Activated CD4-positive, alpha-beta memory T cell treated with anti-CD3 and anti-CD28 coated beads, Interleukin-2, amount 10 ng/mL, durations not matched to agents 7 days and 5 days (primary cell): ENCODE measurements at regions of chr1 and their contacts with region 1.

Region 1: GRCh38 chr1:94512816-94513215 is 28.7 kb downstream of the F3 start:
- DNase-seq: no peak
- H3K4me3 Mint-ChIP-seq: no peak overlapping the region
- H3K27ac Mint-ChIP-seq: no peak overlapping the region
- H3K4me1 Mint-ChIP-seq: no peaks in the 10 kb centered on the region
- H3K27me3 Mint-ChIP-seq: no peaks in the 10 kb centered on the region

Region 2: DNA sequence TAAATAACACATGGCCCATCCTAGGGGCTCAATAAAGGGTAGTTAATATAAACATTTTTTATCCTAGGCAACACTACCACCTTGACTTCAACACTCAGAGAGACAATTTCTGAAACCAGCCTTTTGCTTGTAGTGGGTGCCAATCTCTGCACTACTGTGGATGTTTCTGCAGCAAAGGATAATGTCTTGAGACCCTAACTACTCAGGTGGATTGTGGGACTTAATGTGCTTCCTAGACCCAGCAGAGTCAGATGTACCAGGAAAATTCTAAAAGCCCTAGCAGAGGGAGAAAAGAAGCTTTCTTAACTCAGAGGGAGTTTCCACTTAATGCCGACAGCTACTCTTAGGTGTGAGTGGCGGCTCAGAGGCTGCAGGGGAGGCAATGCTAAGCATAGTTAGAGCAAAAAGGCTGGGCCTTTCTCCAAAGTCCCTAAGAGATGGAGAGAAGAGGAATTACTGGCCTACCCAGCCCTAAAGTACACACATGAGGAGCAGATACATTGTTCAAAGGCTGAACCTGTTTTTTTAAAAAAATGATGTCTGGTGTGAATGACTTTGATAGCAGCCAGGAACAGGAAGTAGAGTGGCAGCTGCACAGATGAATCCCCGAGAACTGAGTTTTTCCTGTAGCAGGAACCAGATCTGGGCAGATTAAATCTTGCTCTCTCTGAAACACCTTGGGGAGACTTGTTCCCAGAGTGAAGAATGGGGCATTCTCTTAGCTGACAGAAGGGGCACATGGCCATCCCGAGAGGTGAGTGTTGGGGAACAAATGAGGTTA is 128.1 kb before region 1 on chr1:
- CTCF ChIA-PET with region 1: no interaction called
- POLR2A ChIA-PET with region 1: no interaction called
- DNase-seq: no peak
- H3K4me3 Mint-ChIP-seq: no peak overlapping the region
- H3K27ac Mint-ChIP-seq: no peak overlapping the region
- H3K4me1 Mint-ChIP-seq: peaks cover 18% of the 10 kb centered on the region
- H3K27me3 Mint-ChIP-seq: peaks cover 15% of the 10 kb centered on the region

Region 3: GRCh38 chr1:94417978-94418663 is 94.7 kb before region 1 on chr1 and contains the start of gene ABCD3:
- CTCF ChIA-PET with region 1: no interaction called
- POLR2A ChIA-PET with region 1: no interaction called
- DNase-seq: peak; percentile 96
- H3K4me3 Mint-ChIP-seq: no peak within 1 kb of the TSS
- H3K27ac Mint-ChIP-seq: peak within 1 kb of the TSS; percentile 42
- H3K4me1 Mint-ChIP-seq: peaks cover 21% of the 10 kb centered on the region
- H3K27me3 Mint-ChIP-seq: peaks cover 12% of the 10 kb centered on the region
- total RNA-seq, gene ABCD3: 19.6 to 21.4 TPM

Region 4: DNA sequence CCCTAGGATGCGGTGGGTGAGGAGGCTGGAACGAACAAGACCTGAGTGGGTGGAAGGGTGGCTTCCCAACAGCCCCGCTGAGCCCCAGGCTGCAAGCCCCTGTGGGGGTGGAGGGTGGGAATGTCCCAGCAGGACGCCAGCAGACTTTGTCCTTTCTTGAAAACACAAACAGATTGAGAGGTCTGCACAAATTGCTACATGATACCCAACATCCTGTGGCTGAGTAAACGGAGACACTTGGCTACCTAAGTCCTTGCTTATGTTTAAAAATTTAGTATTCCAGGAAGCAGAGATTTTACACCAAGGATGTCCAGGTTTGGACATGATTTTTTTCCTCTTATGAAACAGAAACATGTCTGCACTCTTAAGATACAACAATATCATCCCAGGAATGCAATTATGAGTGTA is 40.5 kb after region 1 on chr1:
- CTCF ChIA-PET with region 1: no interaction called
- POLR2A ChIA-PET with region 1: no interaction called
- DNase-seq: no peak
- H3K4me3 Mint-ChIP-seq: no peak overlapping the region
- H3K27ac Mint-ChIP-seq: no peak overlapping the region
- H3K4me1 Mint-ChIP-seq: no peaks in the 10 kb centered on the region
- H3K27me3 Mint-ChIP-seq: peaks cover 8% of the 10 kb centered on the region

Region 5: GRCh38 chr1:94801919-94802546 is 289.2 kb after region 1 on chr1:
- CTCF ChIA-PET with region 1: interaction called, 11 read pairs
- POLR2A ChIA-PET with region 1: no interaction called
- DNase-seq: no peak
- H3K4me3 Mint-ChIP-seq: peak overlapping the region; percentile 34
- H3K27ac Mint-ChIP-seq: no peak overlapping the region
- H3K4me1 Mint-ChIP-seq: peaks cover 14% of the 10 kb centered on the region
- H3K27me3 Mint-ChIP-seq: no peaks in the 10 kb centered on the region